HCT116 (cell line): ENCODE measurements at regions of chr1 and their contacts with region 1.

Region 1: GRCh38 chr1:232047474-232047873 is 420.9 kb downstream of the DISC1 start:
- DNase-seq: peak; percentile 13
- ATAC-seq: peak; percentile 62
- H3K4me3 ChIP-seq: no peak overlapping the region
- H3K27ac ChIP-seq: no peak overlapping the region
- H3K4me1 ChIP-seq: no peaks in the 10 kb centered on the region
- H3K27me3 ChIP-seq: peaks cover 12% of the 10 kb centered on the region
- CTCF ChIP-seq: peak in 2 of 3 experiments; percentile 39 to 50; a peak in 4 of 6 replicates
- POLR2A ChIP-seq: no peak
- RAD21 ChIP-seq: peak; percentile 48

Region 2: GRCh38 chr1:230940848-230941247 is 1106.6 kb before region 1 on chr1:
- CTCF ChIA-PET with region 1: no interaction called
- POLR2A ChIA-PET with region 1: no interaction called
- RAD21 ChIA-PET with region 1: no interaction called
- intact Hi-C with region 1: loop called (anchors 5 kb)
- DNase-seq: no peak
- ATAC-seq: no peak
- H3K4me3 ChIP-seq: no peak overlapping the region
- H3K27ac ChIP-seq: no peak overlapping the region
- H3K4me1 ChIP-seq: 0 out of 4 replicates have a peak, but pooled peaks cover 0 to 3% of the 10 kb centered on the region in 2 experiments
- H3K27me3 ChIP-seq: no peaks in the 10 kb centered on the region
- CTCF ChIP-seq: no peak
- POLR2A ChIP-seq: no peak
- RAD21 ChIP-seq: no peak